Cardiac septum (tissue), 1 donor: ENCODE measurements at regions of chr4 and their contacts with region 1.

Region 1: GRCh38 chr4:176780990-176781738 is 11.6 kb downstream of the VEGFC start:
- DNase-seq: no peak

Region 2: GRCh38 chr4:176259330-176260090 is 521.7 kb before region 1 on chr4:
- intact Hi-C with region 1: no loop called
- DNase-seq: no peak

Region 3: GRCh38 chr4:176718881-176719280 is 62.3 kb before region 1 on chr4:
- intact Hi-C with region 1: loop called (anchors 5 kb)
- DNase-seq: no peak

Region 4: DNA sequence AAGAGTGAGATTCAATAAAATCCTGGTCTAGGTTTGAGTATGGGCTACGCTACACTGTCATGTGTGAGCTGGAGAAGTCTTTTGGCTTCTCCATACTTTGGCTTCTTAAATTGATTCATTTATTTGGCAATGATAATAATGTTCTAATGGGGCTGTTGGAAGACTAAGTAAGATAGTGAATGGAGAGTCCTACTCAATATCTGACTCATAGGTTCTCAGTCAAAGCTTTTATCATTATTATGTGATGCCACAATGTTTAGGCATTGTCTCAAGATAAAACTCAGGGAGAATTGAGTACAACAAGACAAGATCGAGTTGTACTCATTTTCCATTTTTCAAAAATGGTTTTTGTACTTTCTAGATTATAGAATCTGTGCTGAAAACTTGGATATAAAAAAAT is 104.1 kb after region 1 on chr4:
- intact Hi-C with region 1: no loop called
- DNase-seq: no peak

Region 5: DNA sequence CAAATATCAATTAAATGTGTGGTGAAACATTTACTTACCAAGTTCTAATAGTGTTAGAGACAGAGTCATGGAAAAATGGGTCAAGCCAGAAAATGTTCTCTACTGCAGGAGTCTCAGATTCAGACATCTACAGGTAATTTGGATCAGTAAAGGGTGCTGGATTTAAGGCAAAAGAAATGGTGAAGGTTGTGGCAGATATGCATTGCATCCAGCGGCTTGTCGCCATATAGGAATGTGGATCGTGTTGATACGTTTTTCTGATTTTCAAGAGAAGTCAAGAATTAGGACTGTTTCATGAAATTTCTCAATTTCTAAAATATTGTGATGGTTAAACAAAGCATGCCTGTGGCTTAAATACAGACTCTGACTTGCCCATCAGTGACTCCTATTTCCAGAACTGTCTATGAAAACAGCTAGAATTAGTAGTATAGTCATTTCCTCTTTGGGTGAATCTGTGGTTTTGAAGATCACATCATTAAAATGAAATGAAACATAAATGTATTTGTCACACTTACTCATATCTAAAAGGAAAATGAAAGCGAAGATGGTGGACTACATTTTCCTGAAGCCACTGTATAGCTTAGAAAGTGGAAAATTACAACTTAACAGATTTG is 121.7 kb after region 1 on chr4:
- intact Hi-C with region 1: no loop called
- DNase-seq: no peak